Panc1 (cell line): ENCODE measurements at regions of chr2 and their contacts with region 1.

Region 1: GRCh38 chr2:232541209-232541960 is 1.9 kb downstream of the CHRNG start:
- DNase-seq: no peak
- ATAC-seq: no peak
- H3K4me3 ChIP-seq: no peak overlapping the region
- H3K27ac ChIP-seq: no peak overlapping the region
- H3K4me1 ChIP-seq: no peaks in the 10 kb centered on the region
- H3K27me3 ChIP-seq: no peaks in the 10 kb centered on the region
- CTCF ChIP-seq: no peak

Region 2: GRCh38 chr2:231961349-231962166 is 579.8 kb before region 1 on chr2 and contains the start of gene DIS3L2:
- CTCF ChIA-PET with region 1: no interaction called
- POLR2A ChIA-PET with region 1: interaction called, 19 read pairs
- in situ Hi-C with region 1: no loop called
- intact Hi-C with region 1: no loop called
- DNase-seq: no peak
- ATAC-seq: peak; percentile 99
- H3K4me3 ChIP-seq: peak within 1 kb of the TSS; percentile 87 to 98
- H3K27ac ChIP-seq: peak within 1 kb of the TSS; percentile 92
- H3K4me1 ChIP-seq: peaks cover 4% of the 10 kb centered on the region; the same call in 1 of the 2 replicates
- H3K27me3 ChIP-seq: no peaks in the 10 kb centered on the region
- CTCF ChIP-seq: no peak
- total RNA-seq, gene DIS3L2: 28.1 TPM

Region 3: DNA sequence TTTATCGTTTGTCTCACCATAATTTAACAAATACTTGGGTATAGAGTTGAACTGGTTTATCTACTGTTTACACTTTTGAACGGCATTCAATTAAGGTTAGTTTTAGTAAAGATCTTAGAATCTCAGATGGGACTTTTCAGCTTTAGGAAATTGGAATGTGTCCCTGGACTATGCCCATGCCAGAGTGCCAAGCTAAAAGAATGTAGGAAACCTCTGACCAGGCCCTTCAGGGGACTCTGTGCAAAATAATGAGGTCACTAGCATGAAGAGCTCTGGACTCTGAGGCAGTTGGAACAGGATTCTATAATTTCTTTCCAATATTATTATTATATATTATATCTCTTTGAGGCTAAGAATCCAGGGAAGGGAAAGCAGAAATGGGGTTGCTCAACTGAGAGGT is 566.4 kb before region 1 on chr2:
- CTCF ChIA-PET with region 1: no interaction called
- POLR2A ChIA-PET with region 1: interaction called, 12 read pairs
- in situ Hi-C with region 1: no loop called
- intact Hi-C with region 1: no loop called
- DNase-seq: no peak
- ATAC-seq: no peak
- H3K4me3 ChIP-seq: no peak overlapping the region
- H3K27ac ChIP-seq: no peak overlapping the region
- H3K4me1 ChIP-seq: no peaks in the 10 kb centered on the region
- H3K27me3 ChIP-seq: no peaks in the 10 kb centered on the region
- CTCF ChIP-seq: no peak

Region 4: GRCh38 chr2:232521959-232522622 is 19.3 kb before region 1 on chr2:
- CTCF ChIA-PET with region 1: interaction called, 5 read pairs
- POLR2A ChIA-PET with region 1: interaction called, 20 read pairs
- in situ Hi-C with region 1: no loop called
- intact Hi-C with region 1: no loop called
- DNase-seq: no peak
- ATAC-seq: peak; percentile 58
- H3K4me3 ChIP-seq: 0 out of 4 replicates have a peak overlapping the region, but pooled peaks of 1 of the 2 experiments have one; percentile 11
- H3K27ac ChIP-seq: no peak overlapping the region
- H3K4me1 ChIP-seq: peaks cover 6% of the 10 kb centered on the region; the same call in 1 of the 2 replicates
- H3K27me3 ChIP-seq: no peaks in the 10 kb centered on the region
- CTCF ChIP-seq: peak; percentile 96

Region 5: GRCh38 chr2:232623783-232624727 is 82.7 kb after region 1 on chr2:
- CTCF ChIA-PET with region 1: no interaction called
- POLR2A ChIA-PET with region 1: interaction called, 10 read pairs
- in situ Hi-C with region 1: no loop called
- intact Hi-C with region 1: no loop called
- DNase-seq: no peak
- ATAC-seq: peak; percentile 87
- H3K4me3 ChIP-seq: no peak overlapping the region
- H3K27ac ChIP-seq: peak overlapping the region; percentile 52
- H3K4me1 ChIP-seq: peaks cover 23% of the 10 kb centered on the region
- H3K27me3 ChIP-seq: no peaks in the 10 kb centered on the region; the same call in 1 of the 2 replicates
- CTCF ChIP-seq: no peak